ENCODE measurements at regions of chr3 and their contacts with region 1.

Region 1: GRCh38 chr3:32733631-32734229 is 48.7 kb downstream of the CNOT10 start:
- DNase-seq: peak in 2 of 4 donors; percentile 11 to 38
- ATAC-seq: peak; percentile 53
- H3K4me3 ChIP-seq: no peak overlapping the region
- H3K27ac ChIP-seq: no peak overlapping the region
- H3K4me1 ChIP-seq: no peaks in the 10 kb centered on the region
- H3K27me3 ChIP-seq: no peaks in the 10 kb centered on the region
- CTCF ChIP-seq: peak; percentile 42 to 43

Region 2: DNA sequence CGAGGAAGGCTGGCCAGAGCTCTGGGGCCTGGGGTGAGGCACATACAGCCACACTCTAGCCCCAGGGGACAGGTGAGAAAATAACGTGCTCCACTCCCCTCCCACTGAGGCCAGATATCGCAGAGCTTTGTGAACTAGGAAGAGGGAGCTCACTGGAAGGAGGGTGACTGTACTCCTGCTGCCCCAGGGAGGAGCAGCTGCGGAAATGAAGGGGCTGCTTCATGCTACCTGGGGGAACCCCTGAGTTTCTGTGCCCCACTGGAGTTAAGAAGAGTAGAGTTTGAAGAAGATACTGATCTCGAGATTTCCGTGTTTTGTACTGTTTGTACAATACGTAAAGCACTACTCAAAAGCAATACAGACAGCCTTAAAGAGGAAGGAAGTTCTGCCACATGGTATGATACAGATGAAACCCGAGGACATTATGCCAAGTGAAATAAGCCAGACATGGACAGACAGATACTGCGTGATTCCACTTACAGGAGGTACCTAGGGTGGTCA is 275.7 kb before region 1 on chr3:
- intact Hi-C with region 1: no loop called
- DNase-seq: no peak
- ATAC-seq: peak; percentile 50
- H3K4me3 ChIP-seq: no peak overlapping the region
- H3K27ac ChIP-seq: peak overlapping the region; percentile 50 to 78
- H3K4me1 ChIP-seq: peaks cover 0 to 60% of the 10 kb centered on the region in 2 donors
- H3K27me3 ChIP-seq: no peaks in the 10 kb centered on the region
- CTCF ChIP-seq: no peak

Region 3: DNA sequence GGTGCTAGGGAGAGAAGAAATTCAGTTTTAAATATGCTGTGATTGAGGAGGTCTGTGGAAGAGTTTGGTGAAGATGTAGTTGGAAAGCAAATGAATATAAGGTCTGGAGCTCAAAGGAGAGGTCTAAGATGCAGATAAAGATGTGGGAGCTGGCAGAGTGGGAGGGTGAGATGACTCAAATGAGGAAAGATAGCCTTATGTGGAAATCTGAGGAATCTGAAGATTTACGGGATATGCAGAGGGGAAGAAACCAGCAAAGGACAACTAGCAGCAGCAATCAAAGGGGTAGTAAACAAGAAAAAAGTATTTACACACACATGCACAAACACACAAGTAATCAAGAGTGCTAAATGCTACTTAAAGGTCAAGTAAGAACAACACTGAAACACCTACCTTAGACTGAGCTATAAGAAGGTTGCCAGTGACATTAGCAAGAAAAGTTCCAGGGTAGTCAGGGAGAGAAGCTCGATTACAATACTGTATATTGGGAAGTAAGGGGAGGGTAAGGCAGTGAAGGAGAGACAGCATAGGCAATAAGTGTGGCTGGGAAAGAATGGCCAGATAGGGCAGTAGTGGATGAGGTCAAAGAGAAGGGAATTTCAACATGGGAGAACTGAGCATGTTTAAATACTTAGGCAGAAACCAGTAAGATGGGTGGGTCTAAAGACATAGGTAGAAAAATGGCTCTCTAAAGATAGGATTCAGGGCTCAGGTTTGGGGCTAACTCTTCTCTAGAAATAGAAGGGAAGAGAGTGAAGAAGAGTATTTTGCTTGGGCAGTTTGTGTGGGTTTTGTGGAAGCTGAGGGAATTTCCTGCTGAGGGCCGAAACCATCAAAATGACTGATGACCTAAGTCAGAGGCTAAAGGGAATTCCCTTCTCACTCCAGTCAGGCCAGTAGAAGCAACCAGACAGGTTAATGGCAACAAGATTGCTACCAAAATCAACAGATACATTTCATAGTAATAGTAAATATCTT is 240.0 kb before region 1 on chr3:
- intact Hi-C with region 1: no loop called
- DNase-seq: no peak
- ATAC-seq: peak; percentile 25
- H3K4me3 ChIP-seq: no peak overlapping the region
- H3K27ac ChIP-seq: peak overlapping the region in 1 of 2 donors; percentile 30
- H3K4me1 ChIP-seq: peaks cover 10 to 56% of the 10 kb centered on the region in 2 donors
- H3K27me3 ChIP-seq: no peaks in the 10 kb centered on the region
- CTCF ChIP-seq: no peak

Region 4: GRCh38 chr3:32865405-32865804 is 131.7 kb after region 1 on chr3:
- intact Hi-C with region 1: no loop called
- DNase-seq: peak in 2 of 4 donors; percentile 53 to 68
- ATAC-seq: peak; percentile 73
- H3K4me3 ChIP-seq: no peak overlapping the region
- H3K27ac ChIP-seq: no peak overlapping the region
- H3K4me1 ChIP-seq: no peaks in the 10 kb centered on the region
- H3K27me3 ChIP-seq: no peaks in the 10 kb centered on the region
- CTCF ChIP-seq: no peak

Region 5: GRCh38 chr3:32934150-32934742 is 200.5 kb after region 1 on chr3:
- intact Hi-C with region 1: loop called in 1 of 2 experiments (anchors 10 kb)
- DNase-seq: peak in 1 of 4 donors; percentile 45
- ATAC-seq: peak; percentile 41
- H3K4me3 ChIP-seq: no peak overlapping the region
- H3K27ac ChIP-seq: no peak overlapping the region
- H3K4me1 ChIP-seq: no peaks in the 10 kb centered on the region
- H3K27me3 ChIP-seq: no peaks in the 10 kb centered on the region
- CTCF ChIP-seq: peak; percentile 44 to 64